ENCODE measurements at regions of chr5 and their contacts with region 1.

Region 1: DNA sequence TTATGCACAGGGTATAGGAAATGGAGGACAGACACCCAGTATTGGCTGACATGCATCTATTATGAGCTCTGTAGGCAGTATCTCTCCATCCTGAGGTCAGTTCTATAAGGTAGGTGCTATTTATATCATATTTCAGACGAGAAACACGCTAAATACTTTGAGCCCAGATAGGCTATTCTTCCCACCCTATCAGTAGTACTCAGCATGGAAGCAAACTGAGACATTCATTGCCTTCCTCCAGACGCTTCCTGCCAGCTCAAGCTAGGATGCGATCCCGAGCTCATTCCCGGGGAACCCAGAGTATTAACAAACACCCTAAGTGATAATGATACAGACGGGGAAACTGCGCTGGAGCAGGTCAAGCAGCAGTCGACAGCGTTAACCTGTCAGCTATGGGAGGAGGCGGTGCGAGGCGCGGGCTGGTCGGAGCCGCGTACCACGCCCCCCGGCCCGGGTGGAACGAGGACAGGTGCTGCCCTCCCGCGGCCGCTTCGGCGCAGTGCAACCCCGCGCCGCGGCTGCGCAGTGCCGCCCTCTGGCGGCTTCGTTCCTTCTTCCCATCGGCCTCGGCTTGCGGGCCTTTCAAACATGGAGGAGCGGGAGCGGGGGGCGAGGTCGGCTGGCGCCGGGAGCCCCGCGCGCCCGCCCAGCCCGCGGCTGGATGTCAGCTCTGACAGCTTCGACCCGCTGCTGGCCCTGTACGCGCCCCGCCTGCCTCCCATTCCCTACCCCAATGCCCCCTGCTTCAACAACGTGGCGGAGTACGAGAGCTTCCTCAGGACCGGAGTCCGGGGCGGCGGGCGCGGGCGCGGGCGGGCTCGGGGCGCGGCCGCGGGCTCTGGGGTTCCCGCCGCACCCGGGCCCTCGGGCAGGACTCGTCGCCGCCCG is at the start of gene LSM11:
- DNase-seq: peak; percentile 90
- ATAC-seq: peak; percentile 93
- H3K4me3 Mint-ChIP-seq: peak within 1 kb of the TSS; percentile 93
- H3K27ac Mint-ChIP-seq: no peak within 1 kb of the TSS
- H3K4me1 Mint-ChIP-seq: peaks cover 12% of the 10 kb centered on the region
- H3K27me3 Mint-ChIP-seq: peaks cover 20% of the 10 kb centered on the region
- CTCF ChIP-seq: peak; percentile 99
- total RNA-seq, gene LSM11: 5.2 to 5.8 TPM (median 5.4 TPM) in 3 replicates

Region 2: GRCh38 chr5:157578079-157578780 is 165.2 kb before region 1 on chr5:
- CTCF ChIA-PET with region 1: interaction called, 11 read pairs
- POLR2A ChIA-PET with region 1: no interaction called
- DNase-seq: no peak
- ATAC-seq: no peak
- H3K4me3 Mint-ChIP-seq: no peak overlapping the region
- H3K27ac Mint-ChIP-seq: no peak overlapping the region
- H3K4me1 Mint-ChIP-seq: peaks cover 39% of the 10 kb centered on the region
- H3K27me3 Mint-ChIP-seq: peaks cover 29% of the 10 kb centered on the region
- CTCF ChIP-seq: no peak

Region 3: DNA sequence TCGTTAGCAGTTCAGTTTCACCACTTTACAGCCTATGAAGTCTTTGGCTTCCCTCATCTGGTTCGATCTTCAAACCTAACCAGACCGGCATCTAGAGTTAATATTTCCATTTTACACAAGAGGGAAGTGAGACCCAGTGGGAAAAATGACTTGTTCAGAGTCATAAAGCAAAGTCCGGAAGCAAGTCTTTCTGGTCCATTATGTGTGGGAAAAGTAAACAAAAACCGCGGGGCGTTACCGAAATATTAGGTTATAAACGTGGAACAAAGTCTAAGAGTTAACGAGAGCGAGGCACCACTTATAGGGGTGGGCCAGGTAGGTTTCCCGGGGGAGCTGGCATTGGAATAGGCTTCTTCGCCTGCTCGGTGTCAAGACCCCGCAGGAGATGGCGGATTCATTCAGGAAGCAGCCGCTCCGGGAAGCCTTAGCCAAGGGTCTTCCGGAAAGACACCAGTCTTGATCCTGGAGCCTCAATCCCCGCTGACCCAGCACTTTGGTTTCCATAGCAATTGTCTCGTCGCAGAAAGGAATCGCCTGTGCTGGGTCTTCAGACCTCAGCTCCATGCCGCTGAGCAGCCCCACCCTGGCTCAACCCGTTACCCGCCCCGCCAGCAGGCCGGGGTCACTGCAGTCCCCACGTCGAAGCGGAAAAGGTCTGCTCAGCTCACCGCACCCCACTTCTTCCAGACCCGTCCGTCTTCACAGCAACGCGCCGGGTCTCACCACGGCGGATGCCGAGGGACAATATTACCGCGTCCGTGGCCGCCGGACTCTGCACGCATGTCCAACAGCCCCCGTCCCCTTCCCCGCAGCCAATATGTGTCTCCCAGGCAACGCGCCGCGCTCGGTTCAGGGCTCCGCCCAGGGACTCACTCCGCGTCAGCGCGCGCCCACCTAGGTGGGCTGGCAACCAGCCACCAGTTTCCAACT is 72.5 kb before region 1 on chr5 and contains the start of gene C5orf52:
- CTCF ChIA-PET with region 1: interaction called, 29 read pairs
- POLR2A ChIA-PET with region 1: no interaction called
- DNase-seq: peak; percentile 29
- ATAC-seq: peak; percentile 64
- H3K4me3 Mint-ChIP-seq: peak within 1 kb of the TSS; percentile 88
- H3K27ac Mint-ChIP-seq: no peak within 1 kb of the TSS
- H3K4me1 Mint-ChIP-seq: peaks cover 13% of the 10 kb centered on the region
- H3K27me3 Mint-ChIP-seq: peaks cover 49% of the 10 kb centered on the region
- CTCF ChIP-seq: no peak
- total RNA-seq, gene C5orf52: not detected in 3 replicates

Region 4: DNA sequence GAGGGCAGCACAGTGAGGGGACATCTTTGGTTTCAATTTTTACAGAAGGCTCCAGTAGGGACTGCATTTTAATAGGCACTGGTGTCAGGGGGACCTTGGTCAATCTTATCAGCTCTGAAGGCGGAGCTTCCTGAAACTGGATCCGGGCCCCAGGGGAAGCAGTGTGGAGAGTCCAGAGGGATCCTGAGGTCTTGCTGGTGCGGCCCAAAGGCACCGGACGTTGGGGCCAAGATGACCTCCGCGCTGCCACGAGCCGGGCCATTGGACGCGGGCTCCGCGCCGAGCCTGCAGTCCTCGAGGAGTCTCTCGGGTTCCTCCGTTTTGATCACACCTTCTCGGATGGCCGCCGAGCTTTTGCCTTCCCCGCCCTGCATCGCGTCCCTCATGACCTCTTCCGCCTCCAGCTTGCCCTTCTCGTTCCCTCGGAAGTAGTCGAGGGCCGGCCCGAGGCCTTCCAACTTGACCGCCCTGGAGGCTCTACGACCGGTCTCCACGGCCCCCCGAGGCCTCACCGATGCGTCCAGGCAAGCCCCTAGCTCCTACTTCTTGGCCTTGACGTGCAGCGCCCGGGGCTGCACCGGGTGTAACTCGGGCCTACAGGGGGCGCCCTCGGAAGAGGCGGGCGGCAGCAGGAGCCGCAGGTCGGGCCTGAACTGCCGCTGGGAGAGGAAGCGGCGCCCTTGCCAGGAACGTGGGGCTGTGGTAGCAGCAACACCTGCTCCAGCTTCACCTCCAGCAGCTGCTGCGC is 53.3 kb before region 1 on chr5:
- CTCF ChIA-PET with region 1: interaction called, 10 read pairs
- POLR2A ChIA-PET with region 1: no interaction called
- DNase-seq: peak; percentile 45
- ATAC-seq: peak; percentile 83
- H3K4me3 Mint-ChIP-seq: no peak overlapping the region
- H3K27ac Mint-ChIP-seq: no peak overlapping the region
- H3K4me1 Mint-ChIP-seq: no peaks in the 10 kb centered on the region
- H3K27me3 Mint-ChIP-seq: peaks cover 4% of the 10 kb centered on the region
- CTCF ChIP-seq: 0 out of 2 replicates have a peak, but pooled peaks have one; percentile 23

Region 5: GRCh38 chr5:157731272-157732129 is 11.9 kb before region 1 on chr5 and contains the start of gene THG1L:
- CTCF ChIA-PET with region 1: interaction called, 45 read pairs
- POLR2A ChIA-PET with region 1: interaction called, 3 read pairs
- DNase-seq: peak; percentile 100
- ATAC-seq: peak; percentile 97
- H3K4me3 Mint-ChIP-seq: peak within 1 kb of the TSS; percentile 98
- H3K27ac Mint-ChIP-seq: peak within 1 kb of the TSS; percentile 99
- H3K4me1 Mint-ChIP-seq: peaks cover 5% of the 10 kb centered on the region
- H3K27me3 Mint-ChIP-seq: no peaks in the 10 kb centered on the region
- CTCF ChIP-seq: no peak
- total RNA-seq, gene THG1L: 11.6 to 14.6 TPM (median 12.3 TPM) in 3 replicates